Activated CD8-positive, alpha-beta T cell treated with anti-CD3 and anti-CD28 coated beads, Interleukin-2, amount 10 ng/mL, durations not matched to agents 7 days and 5 days (primary cell): ENCODE measurements at regions of chr11 and their contacts with region 1.

Region 1: DNA sequence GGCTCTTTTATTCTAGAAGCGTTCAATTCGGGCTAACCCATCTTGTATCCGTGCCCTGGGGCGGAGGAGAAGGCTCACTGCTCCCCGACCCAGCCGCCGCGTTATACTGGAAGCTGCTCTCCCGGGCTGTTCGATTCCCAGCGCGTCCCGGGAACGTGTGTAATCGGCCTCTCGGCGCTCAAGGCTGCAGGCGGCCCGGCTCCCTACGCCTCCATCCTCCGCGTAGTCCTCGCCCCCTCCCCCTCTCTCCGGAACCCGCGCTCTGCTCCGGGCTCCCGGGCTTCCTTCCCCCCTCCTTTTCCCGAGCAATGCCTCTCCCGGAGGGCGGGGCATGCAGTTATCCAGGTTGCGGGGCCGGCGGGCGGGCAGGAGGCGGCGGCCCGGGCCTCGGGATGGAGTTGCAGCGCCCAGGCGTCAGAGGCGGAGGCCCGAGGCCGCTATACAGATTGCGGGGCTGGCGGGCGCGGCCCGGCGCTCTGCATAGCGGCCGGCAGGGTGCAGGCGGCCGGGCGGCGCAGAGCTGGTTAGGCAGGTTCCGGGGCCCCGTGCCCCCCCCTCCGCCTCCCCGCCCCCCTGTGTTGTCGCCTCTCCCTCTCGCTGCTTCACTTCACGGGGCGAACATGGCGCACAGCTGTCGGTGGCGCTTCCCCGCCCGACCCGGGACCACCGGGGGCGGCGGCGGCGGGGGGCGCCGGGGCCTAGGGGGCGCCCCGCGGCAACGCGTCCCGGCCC is at the start of gene KMT2A:
- DNase-seq: peak; percentile 92
- ATAC-seq: peak; percentile 50
- H3K4me3 Mint-ChIP-seq: peak within 1 kb of the TSS; percentile 89
- H3K27ac Mint-ChIP-seq: peak within 1 kb of the TSS; percentile 90
- H3K4me1 Mint-ChIP-seq: peaks cover 40% of the 10 kb centered on the region
- H3K27me3 Mint-ChIP-seq: peaks cover 3% of the 10 kb centered on the region
- total RNA-seq, gene KMT2A: 83.1 to 86.7 TPM

Region 2: DNA sequence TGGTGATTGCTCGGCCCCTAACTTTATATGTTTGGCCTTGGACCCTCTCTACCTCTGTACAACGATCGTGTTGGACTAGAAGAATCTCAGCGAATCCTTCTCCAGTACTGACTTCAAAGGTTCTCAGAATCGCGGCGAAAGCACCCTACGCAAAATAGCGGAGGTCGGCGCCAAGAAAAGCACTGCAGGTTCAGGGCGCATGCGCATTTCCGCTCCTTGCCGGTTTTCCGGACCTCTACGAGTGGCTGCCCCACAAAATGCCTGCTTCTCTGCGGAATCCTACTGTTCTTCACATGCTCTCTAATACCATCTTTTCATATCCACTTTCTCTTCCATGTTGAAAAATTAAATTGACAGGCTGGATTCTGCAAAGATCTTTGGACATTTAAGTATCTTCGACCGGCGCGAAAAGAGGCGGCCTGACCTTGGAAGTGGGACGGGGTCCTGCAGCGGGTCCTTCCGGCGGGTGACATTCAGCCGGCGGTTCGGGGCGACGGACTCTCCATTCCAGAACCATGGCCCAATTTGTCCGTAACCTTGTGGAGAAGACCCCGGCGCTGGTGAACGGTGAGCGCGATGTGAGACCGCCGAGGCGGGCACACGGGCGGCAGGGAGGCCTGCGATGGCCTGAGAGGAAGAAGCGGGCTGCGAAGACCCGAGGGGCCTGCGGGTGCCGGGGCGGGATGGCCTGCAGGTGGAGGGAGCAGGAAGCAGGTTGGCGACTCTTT is 34.7 kb before region 1 on chr11 and contains the start of gene ATP5MG:
- CTCF ChIA-PET with region 1: interaction called, 12 read pairs
- POLR2A ChIA-PET with region 1: interaction called, 24 read pairs
- DNase-seq: peak; percentile 96
- ATAC-seq: peak; percentile 59
- H3K4me3 Mint-ChIP-seq: peak within 1 kb of the TSS; percentile 98
- H3K27ac Mint-ChIP-seq: peak within 1 kb of the TSS; percentile 100
- H3K4me1 Mint-ChIP-seq: peaks cover 69% of the 10 kb centered on the region
- H3K27me3 Mint-ChIP-seq: no peaks in the 10 kb centered on the region
- total RNA-seq, gene ATP5MG: 275 to 298 TPM

Region 3: GRCh38 chr11:118448294-118448693 is 12.2 kb after region 1 on chr11:
- CTCF ChIA-PET with region 1: interaction called, 11 read pairs
- POLR2A ChIA-PET with region 1: interaction called, 15 read pairs
- DNase-seq: peak; percentile 28
- ATAC-seq: peak; percentile 91
- H3K4me3 Mint-ChIP-seq: peak overlapping the region; percentile 20
- H3K27ac Mint-ChIP-seq: peak overlapping the region; percentile 33
- H3K4me1 Mint-ChIP-seq: peaks cover 59% of the 10 kb centered on the region
- H3K27me3 Mint-ChIP-seq: no peaks in the 10 kb centered on the region